ENCODE measurements at regions of chr22 and their contacts with region 1.

Region 1: DNA sequence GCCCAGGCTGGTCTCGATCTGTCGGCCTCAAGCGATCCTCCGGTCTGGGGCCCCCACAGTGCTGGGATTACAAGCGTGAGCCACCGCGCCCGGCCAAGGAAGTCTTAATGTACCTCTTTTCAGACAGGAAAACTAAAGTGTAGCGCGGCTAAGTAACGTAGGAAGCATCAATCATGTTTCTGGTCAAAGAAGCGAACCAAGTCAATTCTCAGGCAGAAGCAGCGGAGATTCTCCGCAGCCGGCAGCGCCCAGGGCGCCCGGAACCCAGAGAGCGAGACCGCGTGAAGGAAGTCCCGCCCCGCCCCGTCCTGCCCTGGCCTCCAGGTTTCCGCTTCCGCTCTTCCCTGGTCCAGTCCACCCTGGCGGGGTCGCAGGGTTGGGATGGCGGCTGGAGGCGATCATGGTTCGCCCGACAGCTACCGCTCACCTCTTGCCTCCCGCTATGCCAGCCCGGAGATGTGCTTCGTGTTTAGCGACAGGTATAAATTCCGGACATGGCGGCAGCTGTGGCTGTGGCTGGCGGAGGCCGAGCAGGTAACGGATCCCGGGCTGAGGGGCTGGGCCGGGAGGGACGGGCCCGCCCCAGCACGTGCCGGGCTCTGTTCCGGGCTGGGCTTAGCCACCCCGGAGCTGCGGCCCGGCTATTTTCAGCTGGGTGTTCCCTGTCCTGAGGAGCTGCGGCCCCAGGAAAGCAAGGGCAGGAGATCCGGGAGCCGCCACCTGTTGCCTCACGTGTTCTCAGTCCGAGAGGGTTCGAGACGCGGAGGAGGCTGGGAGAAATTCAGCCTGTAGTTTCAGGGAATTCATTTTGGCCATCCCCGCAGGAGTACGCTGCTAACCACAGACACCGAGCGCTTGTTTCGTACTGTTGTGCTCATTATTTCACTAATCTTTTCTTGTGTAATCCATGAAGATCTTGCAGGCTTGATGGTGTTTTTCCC is at the start of gene ADSL:
- DNase-seq: peak; percentile 91
- H3K4me3 Mint-ChIP-seq: peak within 1 kb of the TSS; percentile 99
- H3K27ac Mint-ChIP-seq: peak within 1 kb of the TSS; percentile 100
- H3K4me1 Mint-ChIP-seq: peaks cover 49% of the 10 kb centered on the region
- H3K27me3 Mint-ChIP-seq: no peaks in the 10 kb centered on the region
- total RNA-seq, gene ADSL: 143 to 146 TPM

Region 2: DNA sequence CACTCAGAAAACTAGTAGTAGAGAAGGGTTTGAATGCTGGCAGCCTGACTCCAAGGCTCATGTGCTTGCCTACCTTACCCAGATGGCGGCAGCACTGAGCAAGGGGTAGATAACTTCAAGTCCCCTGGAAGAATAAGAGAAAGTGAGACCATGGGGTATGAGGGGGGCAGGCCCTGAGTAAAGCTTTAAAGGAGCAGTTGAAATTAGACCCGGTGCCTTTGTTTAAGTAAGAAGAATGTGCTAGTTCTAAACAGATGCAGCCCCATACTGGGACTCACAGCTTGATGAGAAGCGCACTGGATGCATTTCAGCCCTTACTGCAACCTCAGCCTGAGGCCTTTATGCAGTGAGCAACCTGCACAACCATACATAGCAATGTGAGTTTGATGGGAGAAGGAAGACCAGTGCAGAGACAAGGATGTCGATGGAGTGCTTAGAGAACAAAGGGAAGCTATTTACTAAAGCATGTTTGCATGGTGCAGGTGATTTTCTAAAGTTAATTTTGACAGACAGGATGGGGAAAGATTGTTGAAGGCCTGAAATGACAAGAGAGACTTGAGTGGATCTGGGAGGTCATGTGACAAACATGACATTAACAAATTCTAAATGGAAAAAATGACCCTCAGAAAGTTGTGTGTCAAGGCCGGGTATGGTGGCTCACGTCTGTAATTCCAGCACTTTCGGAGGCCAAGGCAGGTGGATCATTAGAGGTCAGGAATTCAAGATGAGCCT is 413.4 kb before region 1 on chr22:
- CTCF ChIA-PET with region 1: interaction called, 3 read pairs
- POLR2A ChIA-PET with region 1: no interaction called
- intact Hi-C with region 1: loop called (anchors 10 kb)
- DNase-seq: peak; percentile 76
- H3K4me3 Mint-ChIP-seq: peak overlapping the region; percentile 74
- H3K27ac Mint-ChIP-seq: peak overlapping the region; percentile 79
- H3K4me1 Mint-ChIP-seq: peaks cover 58% of the 10 kb centered on the region
- H3K27me3 Mint-ChIP-seq: no peaks in the 10 kb centered on the region

Region 3: DNA sequence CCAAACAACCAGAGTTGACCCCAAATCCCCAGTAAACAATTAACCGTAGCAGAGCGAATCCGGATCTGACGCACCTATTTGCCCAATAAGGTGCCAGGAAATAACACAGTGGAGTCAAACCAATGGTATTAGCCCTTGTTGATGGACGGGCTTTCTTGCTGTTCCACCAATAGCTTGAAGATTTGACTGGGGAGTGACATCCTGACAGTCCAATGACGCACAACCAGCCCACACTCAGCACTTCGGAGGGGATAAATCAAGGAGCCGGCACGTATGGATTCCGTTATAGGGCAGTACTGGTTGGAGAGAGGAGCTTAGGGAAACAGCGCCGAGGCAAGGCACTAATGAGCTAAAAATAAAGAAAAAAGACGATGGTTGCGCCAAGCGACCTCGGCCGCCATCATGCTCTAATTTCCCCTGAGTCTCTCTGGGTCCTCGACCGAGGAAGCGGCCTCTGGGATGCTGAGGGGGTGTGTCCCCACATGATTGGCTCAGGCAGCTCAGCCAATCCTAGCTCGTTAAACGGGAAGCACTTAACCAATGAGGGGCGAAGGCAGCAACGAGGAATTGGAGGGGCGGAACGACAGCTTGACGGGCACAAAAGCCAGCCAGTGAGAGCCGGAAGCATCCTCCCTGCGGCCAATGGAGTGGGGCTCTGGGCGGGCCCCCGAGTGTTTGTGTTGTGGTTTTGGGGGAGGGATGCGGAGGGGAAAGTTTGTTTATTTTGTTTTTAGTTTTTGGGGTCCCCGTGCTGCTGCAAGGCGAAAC is 302.2 kb before region 1 on chr22:
- CTCF ChIA-PET with region 1: interaction called, 61 read pairs
- POLR2A ChIA-PET with region 1: interaction called, 32 read pairs
- intact Hi-C with region 1: loop called (anchors 1 kb)
- DNase-seq: peak; percentile 99
- H3K4me3 Mint-ChIP-seq: peak overlapping the region; percentile 93
- H3K27ac Mint-ChIP-seq: peak overlapping the region; percentile 99
- H3K4me1 Mint-ChIP-seq: peaks cover 27% of the 10 kb centered on the region
- H3K27me3 Mint-ChIP-seq: peaks cover 6% of the 10 kb centered on the region

Region 4: DNA sequence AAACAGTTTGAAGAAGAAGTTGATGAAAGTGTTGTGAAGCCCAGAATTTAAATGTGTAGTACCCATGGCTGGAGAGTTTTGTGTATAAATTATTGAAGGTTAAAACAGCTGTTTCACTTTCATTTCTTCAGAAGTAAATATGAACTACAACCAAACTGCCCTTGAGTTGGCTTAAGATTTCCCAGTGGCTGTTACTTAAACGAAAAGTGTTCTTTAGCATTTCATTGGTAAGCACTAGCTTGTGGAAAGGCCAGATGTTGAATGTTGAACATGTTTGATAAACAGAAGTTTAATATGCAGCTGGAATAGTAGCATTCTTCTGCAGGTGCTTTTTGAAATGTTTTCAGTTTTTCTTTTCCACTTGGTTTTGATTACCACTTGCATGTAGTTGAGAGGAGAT is 252.0 kb before region 1 on chr22:
- CTCF ChIA-PET with region 1: interaction called, 12 read pairs
- POLR2A ChIA-PET with region 1: no interaction called
- intact Hi-C with region 1: no loop called
- DNase-seq: no peak
- H3K4me3 Mint-ChIP-seq: peak overlapping the region; percentile 65
- H3K27ac Mint-ChIP-seq: peak overlapping the region; percentile 80
- H3K4me1 Mint-ChIP-seq: peaks cover 64% of the 10 kb centered on the region
- H3K27me3 Mint-ChIP-seq: no peaks in the 10 kb centered on the region

Region 5: GRCh38 chr22:40177738-40178416 is 168.6 kb before region 1 on chr22 and contains the start of gene TNRC6B:
- CTCF ChIA-PET with region 1: interaction called, 16 read pairs
- POLR2A ChIA-PET with region 1: interaction called, 29 read pairs
- intact Hi-C with region 1: loop called (anchors 1 kb)
- DNase-seq: peak; percentile 84
- H3K4me3 Mint-ChIP-seq: peak within 1 kb of the TSS; percentile 89
- H3K27ac Mint-ChIP-seq: peak within 1 kb of the TSS; percentile 92
- H3K4me1 Mint-ChIP-seq: peaks cover 54% of the 10 kb centered on the region
- H3K27me3 Mint-ChIP-seq: no peaks in the 10 kb centered on the region
- total RNA-seq, gene TNRC6B: 34.9 to 38.8 TPM

Region 6: GRCh38 chr22:40276996-40277823 is 69.2 kb before region 1 on chr22:
- CTCF ChIA-PET with region 1: interaction called, 10 read pairs
- POLR2A ChIA-PET with region 1: no interaction called
- intact Hi-C with region 1: no loop called
- DNase-seq: no peak
- H3K4me3 Mint-ChIP-seq: no peak overlapping the region
- H3K27ac Mint-ChIP-seq: peak overlapping the region; percentile 93
- H3K4me1 Mint-ChIP-seq: peaks cover 51% of the 10 kb centered on the region
- H3K27me3 Mint-ChIP-seq: no peaks in the 10 kb centered on the region

Region 7: DNA sequence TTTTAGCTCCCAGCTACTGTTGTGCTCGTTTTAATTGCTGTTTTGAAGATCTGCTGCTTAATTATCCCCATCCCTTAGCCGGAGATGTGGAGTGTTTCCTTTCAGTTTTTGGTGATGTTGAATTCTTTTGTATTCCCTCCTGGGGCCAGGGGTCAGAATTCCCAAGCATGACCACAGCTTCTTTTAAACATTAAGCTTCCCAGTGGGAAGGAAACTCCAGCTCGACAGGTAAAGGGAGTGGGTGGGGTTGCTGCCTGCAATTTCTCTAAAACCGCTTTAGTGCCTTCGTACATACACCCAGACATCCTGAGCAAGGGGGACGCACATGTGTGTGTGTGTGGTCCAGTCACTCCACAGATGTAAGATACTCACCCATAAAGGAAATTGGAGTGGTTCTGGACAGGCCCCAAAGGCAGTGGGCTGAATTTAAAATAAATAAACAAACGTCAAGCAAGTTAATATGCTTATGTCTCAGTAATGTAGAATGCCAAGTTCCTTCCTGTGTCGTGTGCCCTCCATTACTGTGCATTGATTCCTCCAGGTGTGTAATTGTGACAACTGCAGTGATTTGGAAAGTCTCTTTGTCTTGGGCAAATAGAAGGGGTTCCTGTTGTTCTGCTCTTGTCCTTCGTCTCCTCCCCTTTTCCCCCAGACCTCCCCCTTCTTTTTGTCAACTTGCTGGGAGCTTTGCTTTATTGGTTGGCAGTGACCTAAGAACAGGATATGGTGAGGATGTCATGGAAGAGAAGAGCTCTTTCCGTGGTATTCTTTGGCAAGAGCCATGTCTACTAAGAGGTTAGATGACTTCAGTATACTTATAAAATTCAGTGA is 19.3 kb before region 1 on chr22:
- CTCF ChIA-PET with region 1: interaction called, 21 read pairs
- POLR2A ChIA-PET with region 1: interaction called, 5 read pairs
- intact Hi-C with region 1: loop called (anchors 1 kb)
- DNase-seq: no peak
- H3K4me3 Mint-ChIP-seq: no peak overlapping the region
- H3K27ac Mint-ChIP-seq: peak overlapping the region; percentile 77
- H3K4me1 Mint-ChIP-seq: peaks cover 94% of the 10 kb centered on the region
- H3K27me3 Mint-ChIP-seq: no peaks in the 10 kb centered on the region

Measured in activated CD4-positive, alpha-beta memory T cell treated with anti-CD3 and anti-CD28 coated beads for 36 hours (primary cell).